Psoas muscle (tissue), 8 donors: ENCODE measurements at regions of chr6 and their contacts with region 1.

Region 1: GRCh38 chr6:73129653-73130443 is 95.4 kb downstream of the KHDC1L start:
- DNase-seq: peak; percentile 76 to 89
- ATAC-seq: peak; percentile 82 to 93 (median 88)
- H3K4me3 ChIP-seq: peak overlapping the region; percentile 43
- H3K27ac ChIP-seq: peak overlapping the region; percentile 60
- H3K4me1 ChIP-seq: peaks cover 12% of the 10 kb centered on the region
- H3K27me3 ChIP-seq: no peaks in the 10 kb centered on the region
- CTCF ChIP-seq: peak; percentile 91

Region 2: DNA sequence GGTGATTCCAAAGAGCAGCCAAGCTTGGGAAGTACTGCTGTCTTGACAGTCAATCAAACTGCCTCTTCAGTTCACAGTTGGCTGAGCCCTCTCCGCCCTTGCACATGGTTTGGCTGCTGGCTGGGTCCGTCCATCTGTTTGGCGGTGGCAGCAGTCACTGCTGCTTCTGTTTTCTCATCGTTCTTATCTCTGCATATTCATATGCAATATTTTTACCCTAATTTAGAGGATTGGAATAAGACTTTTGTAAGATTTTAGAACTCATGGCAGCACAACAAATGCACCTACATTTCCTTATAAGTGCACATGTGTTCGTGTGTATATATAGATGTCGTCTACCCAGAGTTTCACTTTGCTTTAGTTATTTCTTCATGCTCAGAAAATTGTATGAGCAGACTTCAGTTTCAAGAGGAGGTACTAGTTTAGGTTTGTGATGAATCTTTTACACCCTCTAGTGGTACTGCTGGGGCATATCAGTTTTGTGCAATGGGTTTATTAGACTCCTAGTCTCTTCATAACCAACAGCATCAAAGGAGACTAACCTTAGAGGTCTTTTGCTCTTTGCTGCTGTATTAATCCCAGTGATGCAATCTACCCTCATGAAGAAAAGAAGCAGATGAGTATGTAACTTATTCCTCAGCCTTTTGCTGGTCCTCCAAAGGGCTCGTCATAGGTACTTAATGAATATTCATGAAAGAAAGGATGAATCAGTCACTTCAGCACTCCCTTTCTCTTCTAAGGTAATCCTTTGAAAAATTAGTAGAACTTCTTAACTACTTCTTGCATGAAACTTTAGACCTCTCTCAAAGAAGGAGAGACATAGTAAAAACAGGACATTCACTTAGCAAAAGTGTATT is 51.1 kb after region 1 on chr6:
- intact Hi-C with region 1: loop called in 1 of 2 experiments (anchors 5 kb)
- DNase-seq: no peak
- ATAC-seq: peak; percentile 75 to 95 (median 88)
- H3K4me3 ChIP-seq: peak overlapping the region; percentile 42
- H3K27ac ChIP-seq: peak overlapping the region; percentile 30
- H3K4me1 ChIP-seq: peaks cover 10% of the 10 kb centered on the region
- H3K27me3 ChIP-seq: no peaks in the 10 kb centered on the region
- CTCF ChIP-seq: peak; percentile 77

Region 3: GRCh38 chr6:73285674-73286283 is 155.9 kb after region 1 on chr6:
- intact Hi-C with region 1: no loop called
- DNase-seq: no peak
- ATAC-seq: no peak
- H3K4me3 ChIP-seq: no peak overlapping the region
- H3K27ac ChIP-seq: no peak overlapping the region
- H3K4me1 ChIP-seq: no peaks in the 10 kb centered on the region
- H3K27me3 ChIP-seq: no peaks in the 10 kb centered on the region
- CTCF ChIP-seq: peak; percentile 32